ENCODE measurements at regions of chr12 and their contacts with region 1.

Region 1: DNA sequence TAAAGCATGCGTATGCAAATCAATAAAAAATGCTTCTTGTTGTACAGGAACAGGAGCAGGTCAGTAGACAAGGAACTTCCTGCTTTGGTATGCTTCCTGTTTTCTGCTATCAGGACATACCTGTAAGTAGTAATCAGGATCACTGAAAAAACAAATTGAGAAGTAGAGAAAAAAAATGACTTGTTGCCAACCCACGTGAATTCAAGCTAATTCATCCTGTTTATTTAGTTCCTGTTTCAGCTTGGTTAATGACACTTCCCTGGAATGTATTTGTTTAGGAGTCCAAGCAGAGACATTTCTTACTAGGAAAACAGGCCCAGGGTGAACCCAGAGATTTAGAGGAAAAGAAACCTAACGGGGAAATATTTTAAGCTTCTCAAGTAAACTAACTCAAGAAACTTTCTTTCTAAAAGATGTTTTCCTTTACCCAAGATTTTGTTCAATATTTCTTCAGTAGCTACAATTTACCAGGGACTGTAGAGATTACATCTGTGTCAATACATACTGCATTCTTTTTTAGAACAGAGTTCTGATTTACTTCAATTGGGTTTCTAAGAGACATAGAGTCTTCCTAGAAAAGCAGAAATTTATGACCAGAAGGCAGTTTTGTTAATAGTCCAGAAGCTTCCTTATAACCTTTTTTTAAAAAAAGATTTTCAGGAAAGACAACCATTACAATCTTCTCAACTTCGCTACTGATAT is 124.1 kb downstream of the PAWR start:
- DNase-seq: no peak
- H3K4me3 ChIP-seq: no peak overlapping the region
- H3K27ac ChIP-seq: peak overlapping the region; percentile 84 to 88 (median 86)
- H3K4me1 ChIP-seq: peaks cover 25 to 38% of the 10 kb centered on the region in 2 donors
- H3K27me3 ChIP-seq: no peaks in the 10 kb centered on the region
- CTCF ChIP-seq: no peak
- POLR2A ChIP-seq: no peak

Region 2: GRCh38 chr12:79402606-79403005 is 164.0 kb before region 1 on chr12:
- intact Hi-C with region 1: no loop called
- DNase-seq: no peak
- H3K4me3 ChIP-seq: no peak overlapping the region
- H3K27ac ChIP-seq: no peak overlapping the region
- H3K4me1 ChIP-seq: no peaks in the 10 kb centered on the region
- H3K27me3 ChIP-seq: no peaks in the 10 kb centered on the region
- CTCF ChIP-seq: no peak
- POLR2A ChIP-seq: no peak

Region 3: DNA sequence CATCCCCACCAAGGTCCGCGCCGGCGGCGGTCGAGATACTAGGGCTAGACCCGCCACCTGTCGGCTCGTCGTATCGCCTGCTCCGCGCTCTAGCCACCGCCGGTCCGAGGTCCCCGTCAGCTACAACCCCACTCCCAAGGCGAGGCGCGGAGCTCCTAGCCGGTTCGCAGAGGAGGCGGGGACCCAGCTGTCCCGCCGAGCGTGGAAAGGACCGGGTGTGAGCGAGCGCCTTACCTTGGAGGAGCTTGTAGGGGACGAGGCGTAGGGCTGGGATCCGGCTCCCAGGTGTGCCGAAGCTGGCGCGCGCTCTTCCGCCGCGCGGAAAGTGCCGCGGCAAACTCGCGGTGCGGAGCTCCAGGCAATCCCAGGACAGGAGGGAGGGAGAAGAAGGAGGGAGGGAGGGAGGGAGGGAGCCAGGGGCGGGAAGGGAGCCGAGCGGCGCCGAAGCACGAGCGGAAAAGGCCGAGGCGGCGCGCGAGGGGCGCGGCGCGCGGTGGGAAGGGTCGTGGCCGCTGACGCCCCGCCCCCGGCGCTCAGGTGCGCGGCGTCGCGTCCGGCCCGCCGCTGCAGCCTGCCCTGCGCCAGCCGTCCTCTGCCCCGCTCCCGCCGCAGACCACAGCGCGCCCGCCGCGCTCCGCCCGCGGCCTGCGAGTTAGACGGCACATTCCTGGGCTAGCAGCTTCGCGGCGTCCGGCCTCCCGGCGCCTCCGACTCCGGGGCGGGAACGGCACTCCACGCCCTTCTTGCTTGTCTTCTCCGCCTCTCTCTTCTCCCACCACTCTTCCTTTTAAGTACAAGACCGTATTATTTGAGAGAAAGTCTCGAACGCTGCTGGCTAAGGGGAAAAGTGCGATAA is 124.2 kb after region 1 on chr12 and contains the start of gene PAWR:
- intact Hi-C with region 1: loop called (anchors 10 kb)
- DNase-seq: peak; percentile 84 to 87
- H3K4me3 ChIP-seq: peak within 1 kb of the TSS; percentile 80 to 98 (median 92)
- H3K27ac ChIP-seq: peak within 1 kb of the TSS; percentile 96 to 98 (median 97)
- H3K4me1 ChIP-seq: peaks cover 14 to 17% of the 10 kb centered on the region in 2 donors
- H3K27me3 ChIP-seq: no peaks in the 10 kb centered on the region
- CTCF ChIP-seq: peak in 4 of 6 experiments; percentile 35 to 64 (median 48)
- POLR2A ChIP-seq: peak; percentile 57 to 96
- total RNA-seq, gene PAWR: 83.7 to 125 (median 86.4) TPM